BJ (cell line): ENCODE measurements at regions of chr10 and their contacts with region 1.

Region 1: GRCh38 chr10:34666008-34666705 is 148.9 kb downstream of the PARD3 start:
- DNase-seq: peak; percentile 60
- H3K4me3 ChIP-seq: no peak overlapping the region
- H3K27me3 ChIP-seq: no peaks in the 10 kb centered on the region
- CTCF ChIP-seq: peak; percentile 61

Region 2: DNA sequence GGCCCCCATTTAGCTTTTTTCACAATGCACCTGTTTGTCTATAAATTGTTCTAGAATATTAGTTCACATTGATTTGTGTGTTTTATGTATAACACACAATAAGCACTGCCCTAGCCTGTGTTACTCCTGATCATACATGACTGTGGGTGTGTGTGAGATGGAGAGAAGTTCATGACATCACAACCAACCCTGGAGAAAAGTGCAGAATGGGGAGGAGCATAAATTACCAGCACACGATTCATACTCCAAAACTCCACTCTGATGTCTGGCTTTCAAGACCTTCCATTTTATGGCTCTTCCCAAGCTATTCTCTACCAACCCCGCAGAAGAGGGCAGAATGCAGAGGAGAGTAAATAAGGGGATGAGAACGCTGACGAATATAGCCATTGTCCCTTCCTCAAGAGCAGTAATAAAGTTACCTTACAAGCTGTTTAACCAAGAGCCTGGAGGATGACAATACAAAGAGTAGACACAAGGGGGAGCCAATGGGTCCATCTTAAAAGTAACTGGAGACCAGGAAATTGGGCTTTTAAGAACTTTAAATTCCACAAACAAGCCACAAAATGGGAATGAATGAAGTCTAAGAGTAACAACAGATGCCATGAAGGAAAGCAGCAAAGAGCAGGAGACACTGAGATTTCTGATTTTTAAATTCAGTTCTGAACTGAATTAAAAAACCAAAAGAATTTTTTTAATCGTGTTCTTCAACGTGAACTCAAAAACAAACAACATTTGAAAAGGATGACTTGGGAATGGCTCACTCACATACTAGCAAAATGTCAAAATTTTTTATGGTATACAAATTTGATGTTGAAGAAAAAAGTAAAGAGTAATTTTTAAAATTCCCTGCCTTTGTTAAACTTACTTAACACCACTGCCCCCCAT is 10.6 kb before region 1 on chr10:
- CTCF ChIA-PET with region 1: interaction called, 20 read pairs
- POLR2A ChIA-PET with region 1: no interaction called
- DNase-seq: peak; percentile 41
- H3K4me3 ChIP-seq: no peak overlapping the region
- H3K27me3 ChIP-seq: no peaks in the 10 kb centered on the region
- CTCF ChIP-seq: peak; percentile 76

Region 3: DNA sequence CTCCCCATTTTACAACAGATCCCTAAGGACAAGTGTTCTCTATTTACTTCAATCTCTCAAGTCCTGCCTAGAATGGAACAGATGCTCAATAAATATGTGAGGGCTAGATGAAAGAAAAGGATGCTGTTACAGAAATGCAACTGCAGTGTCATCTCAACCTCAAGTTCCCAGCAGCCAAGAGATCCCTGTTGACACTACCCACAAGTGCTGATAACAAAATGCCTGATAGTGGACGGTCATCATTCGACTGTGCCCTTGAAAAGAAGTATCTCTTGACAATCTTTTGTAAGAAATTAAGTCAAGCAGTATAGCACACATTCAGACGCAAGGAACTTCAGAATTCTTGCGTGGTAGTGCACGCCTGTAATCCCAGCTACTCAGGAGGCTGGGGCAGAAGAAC is 15.8 kb after region 1 on chr10:
- CTCF ChIA-PET with region 1: interaction called, 11 read pairs
- POLR2A ChIA-PET with region 1: no interaction called
- DNase-seq: no peak
- H3K4me3 ChIP-seq: no peak overlapping the region
- H3K27me3 ChIP-seq: no peaks in the 10 kb centered on the region
- CTCF ChIP-seq: no peak

Region 4: GRCh38 chr10:34739915-34740314 is 73.8 kb after region 1 on chr10:
- CTCF ChIA-PET with region 1: no interaction called
- POLR2A ChIA-PET with region 1: no interaction called
- DNase-seq: peak; percentile 57
- H3K4me3 ChIP-seq: peak overlapping the region; percentile 15
- H3K27me3 ChIP-seq: no peaks in the 10 kb centered on the region
- CTCF ChIP-seq: no peak